Activated naive CD4-positive, alpha-beta T cell treated with anti-CD3 and anti-CD28 coated beads, Interleukin-2, amount 10 ng/mL, durations not matched to agents 7 days and 5 days (primary cell): ENCODE measurements at regions of chr13 and their contacts with region 1.

Region 1: GRCh38 chr13:48580185-48580803 is 47.4 kb upstream of the RCBTB2 start:
- DNase-seq: peak; percentile 82
- H3K4me3 Mint-ChIP-seq: no peak overlapping the region
- H3K27ac Mint-ChIP-seq: no peak overlapping the region
- H3K4me1 Mint-ChIP-seq: peaks cover 42% of the 10 kb centered on the region
- H3K27me3 Mint-ChIP-seq: peaks cover 45% of the 10 kb centered on the region

Region 2: GRCh38 chr13:48126944-48127830 is 453.1 kb before region 1 on chr13:
- CTCF ChIA-PET with region 1: interaction called, 17 read pairs
- DNase-seq: peak; percentile 37
- H3K4me3 Mint-ChIP-seq: no peak overlapping the region
- H3K27ac Mint-ChIP-seq: peak overlapping the region; percentile 15
- H3K4me1 Mint-ChIP-seq: peaks cover 31% of the 10 kb centered on the region
- H3K27me3 Mint-ChIP-seq: no peaks in the 10 kb centered on the region

Region 3: GRCh38 chr13:48400850-48401291 is 179.4 kb before region 1 on chr13:
- CTCF ChIA-PET with region 1: interaction called, 20 read pairs
- DNase-seq: no peak
- H3K4me3 Mint-ChIP-seq: peak overlapping the region; percentile 37
- H3K27ac Mint-ChIP-seq: peak overlapping the region; percentile 80
- H3K4me1 Mint-ChIP-seq: peaks cover 75% of the 10 kb centered on the region
- H3K27me3 Mint-ChIP-seq: no peaks in the 10 kb centered on the region

Region 4: GRCh38 chr13:48562296-48563066 is 17.8 kb before region 1 on chr13:
- CTCF ChIA-PET with region 1: interaction called, 14 read pairs
- DNase-seq: peak; percentile 86
- H3K4me3 Mint-ChIP-seq: peak overlapping the region; percentile 35
- H3K27ac Mint-ChIP-seq: peak overlapping the region; percentile 89
- H3K4me1 Mint-ChIP-seq: peaks cover 72% of the 10 kb centered on the region
- H3K27me3 Mint-ChIP-seq: peaks cover 4% of the 10 kb centered on the region

Region 5: GRCh38 chr13:48741377-48741776 is 161.1 kb after region 1 on chr13:
- CTCF ChIA-PET with region 1: no interaction called
- DNase-seq: no peak
- H3K4me3 Mint-ChIP-seq: no peak overlapping the region
- H3K27ac Mint-ChIP-seq: no peak overlapping the region
- H3K4me1 Mint-ChIP-seq: no peaks in the 10 kb centered on the region
- H3K27me3 Mint-ChIP-seq: no peaks in the 10 kb centered on the region

Region 6: DNA sequence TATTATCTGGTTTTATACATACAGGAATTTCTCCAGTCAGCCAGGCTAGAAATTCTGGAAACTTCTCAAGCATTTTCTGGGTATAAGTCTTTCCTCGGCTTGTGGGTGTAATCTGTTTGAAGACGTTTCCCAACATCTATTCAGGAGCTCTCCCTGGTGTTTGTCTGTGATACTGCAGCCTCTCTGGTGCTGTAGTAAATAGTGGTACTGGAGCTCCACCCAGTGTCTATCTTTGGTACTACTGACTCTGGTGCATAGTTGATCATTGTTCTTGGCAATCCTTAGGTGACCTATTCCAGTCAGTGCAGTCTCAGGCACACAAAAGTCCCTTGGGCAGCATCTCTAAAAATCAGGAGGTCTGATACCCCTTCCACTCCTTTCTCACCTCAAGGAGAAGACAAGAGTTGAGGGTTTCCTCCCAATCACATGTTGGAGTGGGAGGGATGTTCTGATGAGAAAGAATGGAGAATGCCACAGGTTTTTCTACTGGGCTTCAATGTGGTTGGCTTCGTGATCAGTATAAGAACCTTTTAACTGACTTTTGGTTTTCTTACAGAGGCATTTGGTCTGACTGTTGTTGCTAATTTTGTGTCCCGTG is 188.9 kb after region 1 on chr13:
- CTCF ChIA-PET with region 1: interaction called, 26 read pairs
- DNase-seq: peak; percentile 88
- H3K4me3 Mint-ChIP-seq: no peak overlapping the region
- H3K27ac Mint-ChIP-seq: no peak overlapping the region
- H3K4me1 Mint-ChIP-seq: peaks cover 26% of the 10 kb centered on the region
- H3K27me3 Mint-ChIP-seq: peaks cover 26% of the 10 kb centered on the region